Colonic mucosa (tissue), 4 donors: ENCODE measurements at regions of chr6 and their contacts with region 1.

Region 1: DNA sequence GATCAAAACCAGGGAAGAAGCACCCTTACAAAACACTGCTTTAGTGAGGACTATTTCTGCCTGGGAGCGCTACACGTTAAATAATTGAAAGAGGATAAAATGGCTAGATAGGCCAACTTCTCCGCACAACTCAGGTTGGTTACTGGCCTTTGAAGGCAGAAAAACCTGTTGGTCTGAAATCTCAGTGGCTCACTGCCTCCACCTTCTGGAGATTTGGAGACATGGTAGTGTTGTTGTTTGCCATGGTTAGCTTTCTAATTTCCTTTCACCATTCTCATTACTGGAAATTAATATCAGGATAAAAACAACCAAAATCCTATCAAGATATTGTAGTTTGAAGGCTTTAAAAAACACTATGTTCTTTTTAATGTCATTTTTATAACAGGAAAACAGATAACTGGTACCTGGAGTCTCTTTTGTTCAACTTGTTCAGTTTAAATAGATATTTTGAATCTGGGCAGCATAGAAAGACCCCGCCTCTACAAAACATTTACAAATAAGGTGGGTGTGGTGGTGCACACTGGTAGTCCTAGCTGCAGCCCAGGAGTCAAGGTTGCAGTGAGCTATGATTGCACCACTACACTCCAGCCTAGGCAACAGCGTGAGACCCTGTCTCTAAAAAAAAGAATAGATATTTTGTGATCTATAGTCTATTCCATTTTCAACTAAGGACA is 27.5 kb upstream of the BCLAF1 start:
- DNase-seq: peak; percentile 60
- H3K4me3 ChIP-seq: no peak overlapping the region
- H3K27ac ChIP-seq: no peak overlapping the region
- H3K4me1 ChIP-seq: no peaks in the 10 kb centered on the region
- H3K27me3 ChIP-seq: no peaks in the 10 kb centered on the region
- CTCF ChIP-seq: peak; percentile 82

Region 2: DNA sequence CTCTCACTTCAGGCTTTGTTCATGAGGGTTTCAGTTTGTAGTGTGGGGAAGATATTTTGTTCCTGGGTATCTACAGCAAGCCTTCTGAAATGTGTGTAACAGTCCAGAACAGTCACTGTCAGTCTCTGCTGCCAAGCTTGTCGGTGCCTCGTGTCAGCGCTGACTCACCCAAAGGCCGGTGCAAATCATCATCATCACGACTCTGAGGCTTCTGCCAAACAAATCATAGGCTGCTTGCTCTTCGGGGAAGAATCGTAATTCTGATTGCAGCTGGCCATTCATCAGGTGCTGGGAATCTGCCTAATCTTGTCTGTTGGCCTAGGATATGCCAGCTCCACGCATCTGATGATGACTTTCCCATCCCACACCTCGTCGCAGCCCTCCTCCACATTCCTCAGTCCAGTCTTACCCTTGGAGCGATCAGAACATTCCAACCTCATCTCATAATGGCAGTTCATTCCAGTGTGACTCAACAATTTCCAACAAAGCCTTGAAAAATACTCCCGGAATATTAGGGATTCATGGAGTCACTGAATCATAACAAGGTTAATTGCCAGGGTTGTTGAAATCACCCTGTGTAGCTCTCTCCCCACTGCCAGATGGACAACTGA is 1408.1 kb before region 1 on chr6:
- intact Hi-C with region 1: no loop called
- DNase-seq: peak; percentile 32
- H3K4me3 ChIP-seq: no peak overlapping the region
- H3K27ac ChIP-seq: no peak overlapping the region
- H3K4me1 ChIP-seq: no peaks in the 10 kb centered on the region
- H3K27me3 ChIP-seq: no peaks in the 10 kb centered on the region
- CTCF ChIP-seq: no peak

Region 3: GRCh38 chr6:135535989-135536414 is 781.2 kb before region 1 on chr6:
- intact Hi-C with region 1: loop called (anchors 10 kb)
- DNase-seq: no peak
- H3K4me3 ChIP-seq: no peak overlapping the region
- H3K27ac ChIP-seq: no peak overlapping the region
- H3K4me1 ChIP-seq: no peaks in the 10 kb centered on the region
- H3K27me3 ChIP-seq: no peaks in the 10 kb centered on the region
- CTCF ChIP-seq: peak; percentile 50

Region 4: DNA sequence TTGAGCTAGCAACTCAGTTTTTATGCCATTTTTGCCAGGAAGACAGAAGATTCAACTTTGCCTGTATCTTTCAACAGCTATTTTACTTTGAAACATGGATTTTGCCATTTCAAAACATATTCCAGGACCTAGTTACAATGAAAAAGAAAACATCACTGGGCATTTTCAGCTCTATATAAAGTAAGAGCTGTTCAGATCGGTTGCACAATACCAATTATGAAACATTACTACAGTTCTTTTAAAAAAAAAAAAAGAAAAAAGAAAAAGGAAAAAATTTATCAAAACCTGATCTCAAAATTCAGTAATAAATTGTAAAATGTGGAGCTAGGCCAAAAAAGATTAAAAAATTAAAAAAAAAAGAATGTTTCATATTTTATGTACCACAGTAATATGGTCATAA is 43.1 kb before region 1 on chr6:
- intact Hi-C with region 1: no loop called
- DNase-seq: no peak
- H3K4me3 ChIP-seq: no peak overlapping the region
- H3K27ac ChIP-seq: no peak overlapping the region
- H3K4me1 ChIP-seq: no peaks in the 10 kb centered on the region
- H3K27me3 ChIP-seq: no peaks in the 10 kb centered on the region
- CTCF ChIP-seq: no peak